ENCODE measurements at regions of chr5 and their contacts with region 1.

Region 1: GRCh38 chr5:69334793-69335268 is 2.2 kb upstream of the CCDC125 start:
- DNase-seq: peak; percentile 85
- ATAC-seq: peak; percentile 70 to 92 (median 88)
- H3K4me3 ChIP-seq: peak overlapping the region in 5 of 10 donors; percentile 14 to 27 (median 20)
- H3K27ac ChIP-seq: peak overlapping the region in 5 of 10 donors; percentile 5 to 58 (median 43)
- H3K4me1 ChIP-seq: peaks cover 0 to 32% (median 12%) of the 10 kb centered on the region in 9 donors
- H3K27me3 ChIP-seq: no peaks in the 10 kb centered on the region
- CTCF ChIP-seq: peak; percentile 69 to 85 (median 76)

Region 2: DNA sequence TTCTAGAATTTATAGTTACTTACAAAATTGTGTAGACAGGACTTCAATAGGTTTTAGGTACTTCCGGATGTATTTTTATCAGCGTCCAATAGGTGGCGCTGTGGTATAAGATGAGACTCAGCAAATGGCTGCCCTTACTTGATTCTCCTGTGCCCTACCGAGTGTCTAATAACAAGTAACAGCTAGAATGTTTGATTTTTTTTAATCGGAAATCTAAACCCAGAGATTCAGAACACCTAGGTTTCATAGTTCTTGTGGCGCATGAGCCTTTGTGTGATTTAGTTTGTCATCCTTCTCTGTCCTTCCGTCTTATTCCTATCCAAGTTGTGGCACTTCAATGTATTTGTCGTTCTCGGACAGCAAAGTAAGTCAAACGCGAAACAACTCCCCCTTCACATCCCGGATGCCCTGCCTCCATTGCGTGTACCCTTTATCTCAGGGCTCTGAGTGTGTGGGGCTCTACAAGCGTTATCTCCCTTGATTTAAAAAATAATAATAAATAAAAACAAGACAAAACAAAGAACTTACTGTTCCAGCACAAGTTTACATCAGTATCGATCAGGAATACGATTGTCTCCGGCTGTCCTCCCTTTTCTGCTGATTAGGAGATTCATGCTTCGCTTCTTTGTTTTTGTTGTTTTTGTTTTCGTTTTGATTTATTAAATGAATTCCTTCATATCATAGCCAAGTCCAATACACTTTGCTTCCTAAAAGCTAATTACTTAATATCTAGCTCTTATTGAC is 291.7 kb before region 1 on chr5:
- intact Hi-C with region 1: loop called in 8 of 10 experiments (anchors 2 to 10 kb)
- DNase-seq: peak; percentile 18 to 87
- ATAC-seq: peak; percentile 88 to 98 (median 95)
- H3K4me3 ChIP-seq: peak overlapping the region; percentile 1 to 64 (median 52)
- H3K27ac ChIP-seq: peak overlapping the region; percentile 7 to 85 (median 78)
- H3K4me1 ChIP-seq: peaks cover 0 to 6% (median 0%) of the 10 kb centered on the region in 9 donors
- H3K27me3 ChIP-seq: no peaks in the 10 kb centered on the region
- CTCF ChIP-seq: peak; percentile 81 to 91 (median 87)

Region 3: DNA sequence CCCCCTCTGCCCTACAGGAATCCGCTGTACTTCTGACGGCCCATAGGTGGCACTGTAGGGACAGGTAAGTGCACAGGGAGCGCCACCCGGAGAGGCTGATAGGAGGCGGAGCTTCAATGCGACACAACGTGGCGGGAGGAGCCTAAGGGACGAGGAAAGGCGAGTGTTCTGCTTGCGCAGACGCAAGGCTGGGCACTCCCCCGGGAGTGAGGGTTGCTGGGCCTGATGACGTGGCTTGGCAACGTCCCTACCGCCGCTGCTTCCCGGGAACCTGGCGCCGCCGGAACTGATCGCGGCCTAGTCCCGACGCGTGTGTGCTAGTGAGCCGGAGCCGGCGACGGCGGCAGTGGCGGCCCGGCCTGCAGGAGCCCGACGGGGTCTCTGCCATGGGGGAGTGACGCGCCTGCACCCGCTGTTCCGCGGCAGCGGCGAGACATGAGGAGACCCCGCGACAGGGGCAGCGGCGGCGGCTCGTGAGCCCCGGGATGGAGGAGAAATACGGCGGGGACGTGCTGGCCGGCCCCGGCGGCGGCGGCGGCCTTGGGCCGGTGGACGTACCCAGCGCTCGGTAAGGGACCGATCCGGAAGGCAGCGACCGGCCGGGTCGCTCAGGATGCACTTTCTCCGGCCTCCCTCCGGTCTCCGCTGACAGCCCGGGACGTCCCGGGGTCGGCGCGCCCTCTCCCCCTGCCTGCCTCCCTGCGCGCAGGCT is 240.9 kb before region 1 on chr5 and contains the start of gene SLC30A5:
- intact Hi-C with region 1: loop called in 5 of 10 experiments (anchors 5 to 10 kb)
- DNase-seq: peak; percentile 99
- ATAC-seq: peak; percentile 100
- H3K4me3 ChIP-seq: peak within 1 kb of the TSS; percentile 68 to 100 (median 83)
- H3K27ac ChIP-seq: peak within 1 kb of the TSS; percentile 86 to 99 (median 96)
- H3K4me1 ChIP-seq: peaks cover 4 to 38% (median 22%) of the 10 kb centered on the region in 9 donors
- H3K27me3 ChIP-seq: no peaks in the 10 kb centered on the region
- CTCF ChIP-seq: peak; percentile 86 to 99 (median 93)
- total RNA-seq, gene SLC30A5: 25.7 to 36.7 (median 32.1) TPM

Region 4: GRCh38 chr5:69217548-69218526 is 117.0 kb before region 1 on chr5:
- intact Hi-C with region 1: loop called in 1 of 10 experiments (anchors 10 kb)
- DNase-seq: peak; percentile 97 to 99
- ATAC-seq: peak; percentile 98 to 99 (median 99)
- H3K4me3 ChIP-seq: peak overlapping the region; percentile 75 to 100 (median 87)
- H3K27ac ChIP-seq: peak overlapping the region; percentile 95 to 99 (median 98)
- H3K4me1 ChIP-seq: peaks cover 3 to 37% (median 16%) of the 10 kb centered on the region in 9 donors
- H3K27me3 ChIP-seq: no peaks in the 10 kb centered on the region
- CTCF ChIP-seq: peak in 7 of 9 donors; percentile 24 to 47 (median 40)

Region 5: DNA sequence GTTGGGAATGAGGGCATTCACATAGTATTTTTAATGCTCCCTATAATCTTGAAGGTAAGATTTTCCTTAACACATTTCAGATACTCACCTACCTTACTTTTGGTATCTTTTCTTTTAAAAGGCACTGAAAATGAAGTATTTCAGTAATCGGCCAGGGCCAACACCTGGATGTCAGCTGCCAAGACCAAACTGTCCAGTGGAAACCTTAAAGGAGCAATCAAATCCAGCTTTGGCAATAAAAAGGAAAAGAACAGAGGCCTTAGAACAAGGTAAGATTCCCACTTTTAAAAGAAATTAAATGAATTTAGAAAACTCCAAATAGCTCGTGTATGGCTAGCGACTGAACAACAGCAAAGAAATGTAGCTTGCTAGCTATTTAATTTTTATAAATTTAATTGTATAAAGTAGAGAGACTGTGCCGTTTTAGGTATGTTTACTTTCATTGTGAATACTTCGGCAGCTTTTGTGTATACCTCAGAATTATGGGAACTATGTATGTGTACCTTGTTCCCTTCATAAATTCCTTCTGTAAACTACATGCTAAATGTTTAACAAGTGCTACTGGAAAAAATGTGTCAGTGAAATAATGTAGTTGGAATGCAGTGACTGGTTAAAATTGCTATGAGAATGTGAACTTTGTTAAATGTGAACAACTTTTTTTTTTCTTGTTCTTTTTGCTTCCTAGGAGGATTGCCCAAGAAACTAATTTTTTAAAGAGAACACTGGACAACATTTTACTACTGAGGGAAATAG is 58.2 kb before region 1 on chr5:
- intact Hi-C with region 1: no loop called
- DNase-seq: no peak
- ATAC-seq: no peak
- H3K4me3 ChIP-seq: no peak overlapping the region
- H3K27ac ChIP-seq: no peak overlapping the region
- H3K4me1 ChIP-seq: peaks cover 0 to 4% (median 0%) of the 10 kb centered on the region in 9 donors
- H3K27me3 ChIP-seq: no peaks in the 10 kb centered on the region
- CTCF ChIP-seq: no peak

Region 6: DNA sequence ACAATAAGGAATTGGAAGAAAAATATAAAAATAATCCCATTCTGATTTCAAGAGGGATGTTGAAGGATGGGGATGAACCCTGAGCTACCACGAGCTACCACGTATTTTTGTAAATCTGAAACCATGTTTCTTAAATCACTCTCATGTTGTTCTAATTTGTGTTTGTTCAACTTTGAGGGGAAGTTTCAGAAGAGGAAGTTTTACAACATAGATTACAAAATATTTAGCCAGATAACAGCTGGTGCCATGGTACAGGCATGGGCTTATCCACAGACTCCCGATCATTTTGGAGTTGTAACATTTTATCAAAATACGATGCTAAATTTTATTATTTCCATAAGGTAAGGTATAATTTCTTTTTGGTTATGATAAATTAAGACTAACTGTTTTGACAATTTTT is 17.4 kb before region 1 on chr5:
- intact Hi-C with region 1: loop called in 1 of 10 experiments (anchors 1 kb)
- DNase-seq: no peak
- ATAC-seq: no peak
- H3K4me3 ChIP-seq: no peak overlapping the region
- H3K27ac ChIP-seq: peak overlapping the region in 1 of 10 donors; percentile 49
- H3K4me1 ChIP-seq: no peaks in the 10 kb centered on the region
- H3K27me3 ChIP-seq: no peaks in the 10 kb centered on the region
- CTCF ChIP-seq: no peak